ENCODE measurements at regions of chr12 and their contacts with region 1.

Region 1: GRCh38 chr12:123141615-123142517 is 9.0 kb downstream of the PITPNM2 start:
- DNase-seq: no peak
- H3K4me3 ChIP-seq: no peak overlapping the region
- H3K27ac ChIP-seq: peak overlapping the region; percentile 61 to 66
- H3K4me1 ChIP-seq: peaks cover 10% of the 10 kb centered on the region
- H3K27me3 ChIP-seq: no peaks in the 10 kb centered on the region
- CTCF ChIP-seq: no peak
- POLR2A ChIP-seq: no peak

Region 2: DNA sequence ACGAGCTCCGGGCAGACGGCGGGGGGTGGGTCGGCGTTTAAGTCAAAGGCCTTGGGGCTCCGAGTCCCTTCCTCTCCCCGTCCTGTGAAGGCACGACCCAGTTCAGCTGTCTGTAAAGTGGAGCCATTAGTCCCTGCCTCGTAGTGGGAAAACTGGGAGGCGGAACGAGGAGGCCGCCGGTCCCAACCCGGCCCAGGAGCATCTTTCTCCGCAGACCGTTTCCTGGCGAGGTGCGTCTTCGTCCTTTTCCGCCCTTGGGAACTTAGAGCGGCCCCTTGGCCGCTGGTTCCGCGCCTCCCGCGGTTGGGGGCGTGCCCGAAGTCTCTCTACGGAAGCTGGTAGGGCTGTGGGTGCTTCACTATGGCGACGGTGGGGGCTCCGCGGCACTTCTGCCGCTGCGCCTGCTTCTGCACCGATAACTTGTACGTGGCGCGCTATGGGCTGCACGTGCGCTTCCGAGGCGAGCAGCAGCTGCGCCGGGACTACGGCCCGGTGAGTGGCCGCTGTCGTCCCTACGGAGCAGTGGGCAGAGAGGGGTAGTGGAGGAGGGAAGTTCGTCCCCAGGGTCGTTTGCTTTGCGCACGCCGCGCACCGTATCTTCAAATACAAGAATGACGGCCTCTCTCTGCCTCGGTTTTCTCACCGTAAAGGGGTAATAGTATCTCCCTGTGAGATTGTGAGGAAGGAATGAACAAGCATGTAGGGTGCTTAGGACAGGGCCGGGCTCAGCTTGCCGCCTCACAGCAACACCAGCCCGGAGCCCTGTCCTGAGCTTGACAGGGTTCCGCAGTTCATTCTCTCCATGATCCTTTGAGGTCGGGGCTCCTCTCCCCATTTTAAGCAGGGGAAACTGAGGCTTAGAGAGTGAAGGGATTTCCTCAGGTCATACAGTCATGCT is 166.7 kb before region 1 on chr12 and contains the start of gene OGFOD2:
- intact Hi-C with region 1: no loop called
- DNase-seq: peak; percentile 87
- H3K4me3 ChIP-seq: peak within 1 kb of the TSS; percentile 78 to 98
- H3K27ac ChIP-seq: peak within 1 kb of the TSS; percentile 96 to 97
- H3K4me1 ChIP-seq: peaks cover 24% of the 10 kb centered on the region
- H3K27me3 ChIP-seq: no peaks in the 10 kb centered on the region
- CTCF ChIP-seq: peak in 1 of 4 experiments; percentile 14
- POLR2A ChIP-seq: no peak
- total RNA-seq, gene OGFOD2: 26.3 to 27.6 TPM

Region 3: DNA sequence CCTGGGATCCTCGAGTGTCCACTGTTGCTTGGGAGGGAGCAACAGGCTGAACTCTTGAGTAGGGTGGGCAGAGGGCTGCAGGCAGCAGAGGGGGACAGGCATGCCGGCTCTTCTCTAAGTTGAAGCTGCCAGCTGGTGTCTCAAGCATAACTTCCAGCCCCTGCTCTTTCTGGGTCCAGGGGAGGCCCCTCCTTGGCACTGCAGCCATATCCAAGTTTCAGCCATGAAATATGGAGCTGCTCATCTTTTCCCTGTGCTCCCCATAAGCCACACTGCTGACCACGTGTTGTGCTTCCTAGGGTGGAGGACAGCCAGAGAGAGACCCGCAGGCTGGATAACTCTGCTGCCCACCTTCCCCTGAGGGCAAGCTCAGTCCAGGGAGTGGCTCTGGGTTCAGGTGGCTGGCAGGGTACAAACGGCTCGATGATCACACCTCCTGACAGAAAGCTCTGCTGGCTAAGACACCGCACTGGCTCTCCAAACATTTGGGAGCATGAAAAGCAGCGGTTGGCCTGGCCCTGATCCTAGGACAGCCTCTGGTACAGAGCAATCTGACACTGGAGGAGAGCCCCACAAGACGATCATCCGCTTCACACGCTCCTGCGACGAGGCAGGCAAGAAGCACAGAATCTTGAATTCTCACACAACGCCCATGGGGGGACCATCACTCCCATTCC is 70.6 kb before region 1 on chr12:
- intact Hi-C with region 1: no loop called
- DNase-seq: no peak
- H3K4me3 ChIP-seq: no peak overlapping the region
- H3K27ac ChIP-seq: peak overlapping the region in 1 of 2 donors; percentile 10
- H3K4me1 ChIP-seq: no peaks in the 10 kb centered on the region
- H3K27me3 ChIP-seq: no peaks in the 10 kb centered on the region
- CTCF ChIP-seq: no peak
- POLR2A ChIP-seq: no peak

Region 4: GRCh38 chr12:123094349-123095074 is 47.4 kb before region 1 on chr12:
- intact Hi-C with region 1: loop called (anchors 5 kb)
- DNase-seq: peak; percentile 51
- H3K4me3 ChIP-seq: no peak overlapping the region
- H3K27ac ChIP-seq: peak overlapping the region; percentile 24 to 59
- H3K4me1 ChIP-seq: peaks cover 8% of the 10 kb centered on the region
- H3K27me3 ChIP-seq: no peaks in the 10 kb centered on the region
- CTCF ChIP-seq: no peak
- POLR2A ChIP-seq: no peak

Region 5: GRCh38 chr12:123171967-123172366 is 30.1 kb after region 1 on chr12:
- intact Hi-C with region 1: no loop called
- DNase-seq: peak; percentile 24
- H3K4me3 ChIP-seq: no peak overlapping the region
- H3K27ac ChIP-seq: no peak overlapping the region
- H3K4me1 ChIP-seq: no peaks in the 10 kb centered on the region
- H3K27me3 ChIP-seq: no peaks in the 10 kb centered on the region
- CTCF ChIP-seq: no peak
- POLR2A ChIP-seq: no peak